ENCODE measurements at regions of chr1 and their contacts with region 1.

Region 1: DNA sequence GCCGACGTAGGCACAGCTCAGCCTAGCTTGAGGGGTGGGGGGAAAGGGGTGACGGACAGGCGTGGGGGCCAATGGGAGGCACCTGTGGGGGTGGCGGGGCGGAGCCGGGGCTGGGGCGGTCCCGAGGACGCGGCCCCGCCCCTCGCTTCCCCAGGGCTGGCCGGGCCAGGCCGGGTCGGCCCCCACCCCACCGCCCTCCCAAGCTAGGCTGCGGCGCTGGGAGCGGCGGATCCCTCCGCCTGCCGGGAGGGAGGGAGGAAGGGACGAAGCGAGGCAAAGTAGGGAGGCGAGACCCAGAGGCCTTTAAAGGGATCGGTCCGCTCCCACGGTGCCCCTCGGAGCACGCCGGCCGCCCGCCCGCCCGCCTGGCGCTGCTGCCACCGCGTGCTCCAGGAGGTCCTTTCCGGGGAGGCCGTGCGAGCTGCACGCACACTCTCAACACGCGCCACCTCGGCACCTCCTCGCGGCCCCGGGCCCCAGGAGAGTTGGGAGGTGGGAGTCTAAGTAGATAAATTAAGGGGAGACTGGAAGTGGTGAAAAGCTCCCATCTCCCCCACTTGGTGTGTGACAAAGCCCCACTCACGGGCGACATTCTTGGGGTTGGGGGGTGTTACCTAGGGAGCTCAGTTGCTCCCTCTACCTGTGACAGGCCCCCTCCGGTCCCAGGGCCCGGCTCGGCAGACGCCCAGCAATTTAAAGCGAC is 373 bp upstream of the MEF2D start:
- DNase-seq: peak; percentile 87
- H3K4me3 Mint-ChIP-seq: peak overlapping the region; percentile 90
- H3K27ac Mint-ChIP-seq: peak overlapping the region; percentile 91
- H3K4me1 Mint-ChIP-seq: peaks cover 78% of the 10 kb centered on the region
- H3K27me3 Mint-ChIP-seq: no peaks in the 10 kb centered on the region

Region 2: GRCh38 chr1:156338180-156338973 is 162.6 kb before region 1 on chr1 and contains the starts of genes CCT3 and TSACC:
- intact Hi-C with region 1: loop called (anchors 1 kb)
- DNase-seq: peak; percentile 99
- H3K4me3 Mint-ChIP-seq: peak within 1 kb of the TSS; percentile 98
- H3K27ac Mint-ChIP-seq: peak within 1 kb of the TSS; percentile 95
- H3K4me1 Mint-ChIP-seq: peaks cover 41% of the 10 kb centered on the region
- H3K27me3 Mint-ChIP-seq: peaks cover 5% of the 10 kb centered on the region
- total RNA-seq, gene CCT3: 567 and 570 TPM in 2 replicates
- total RNA-seq, gene TSACC: 0.81 TPM in 1 of 2 replicates, not detected in the other

Region 3: DNA sequence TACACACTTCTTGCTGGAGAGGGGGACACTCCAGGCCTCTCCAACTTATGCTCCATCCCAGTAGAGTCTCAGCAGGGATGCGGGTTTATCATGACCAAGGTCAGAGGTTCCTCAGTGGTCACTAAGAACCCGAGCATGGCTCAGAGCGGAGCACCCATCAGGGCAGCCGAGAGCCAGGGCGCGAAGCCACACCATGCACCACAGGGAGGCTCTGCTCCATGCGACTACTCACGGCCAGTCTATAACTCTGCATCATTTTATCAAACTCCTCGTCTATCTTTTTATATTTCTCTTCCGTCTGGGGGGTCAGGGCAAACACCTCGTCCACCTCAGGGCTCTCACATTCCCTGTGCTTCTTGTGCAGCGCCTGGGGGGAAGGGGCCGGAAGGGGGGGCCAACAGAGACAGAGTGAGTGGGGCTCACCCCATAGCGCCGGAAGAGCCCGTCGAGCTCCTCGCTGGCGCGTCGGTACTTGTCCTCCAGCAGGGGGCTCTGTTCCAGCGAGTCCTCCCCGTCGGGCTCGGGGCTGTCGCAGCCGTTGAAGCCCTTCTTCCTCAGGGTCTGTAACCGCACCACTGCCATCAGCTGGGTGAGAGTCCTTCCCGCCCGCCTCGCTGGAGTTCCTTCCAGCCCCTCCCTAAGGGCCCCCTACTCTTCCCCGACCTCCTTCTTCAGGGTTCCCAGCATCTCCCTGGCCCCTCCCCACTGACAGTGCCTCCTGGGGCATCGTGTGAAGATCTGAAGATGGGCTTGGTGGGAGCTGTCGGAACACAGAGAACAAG is 20.3 kb before region 1 on chr1:
- intact Hi-C with region 1: loop called (anchors 1 kb)
- DNase-seq: peak; percentile 63
- H3K4me3 Mint-ChIP-seq: peak overlapping the region; percentile 17
- H3K27ac Mint-ChIP-seq: peak overlapping the region; percentile 78
- H3K4me1 Mint-ChIP-seq: peaks cover 53% of the 10 kb centered on the region
- H3K27me3 Mint-ChIP-seq: no peaks in the 10 kb centered on the region

Region 4: GRCh38 chr1:156524481-156524869 is 23.5 kb after region 1 on chr1:
- intact Hi-C with region 1: loop called (anchors 1 kb)
- DNase-seq: no peak
- H3K4me3 Mint-ChIP-seq: peak overlapping the region; percentile 40
- H3K27ac Mint-ChIP-seq: peak overlapping the region; percentile 82
- H3K4me1 Mint-ChIP-seq: peaks cover 32% of the 10 kb centered on the region
- H3K27me3 Mint-ChIP-seq: no peaks in the 10 kb centered on the region

Region 5: GRCh38 chr1:156601122-156601830 is 100.3 kb after region 1 on chr1 and contains the start of gene GPATCH4:
- intact Hi-C with region 1: loop called (anchors 2 kb)
- DNase-seq: peak; percentile 76
- H3K4me3 Mint-ChIP-seq: peak within 1 kb of the TSS; percentile 100
- H3K27ac Mint-ChIP-seq: peak within 1 kb of the TSS; percentile 99
- H3K4me1 Mint-ChIP-seq: peaks cover 37% of the 10 kb centered on the region
- H3K27me3 Mint-ChIP-seq: no peaks in the 10 kb centered on the region
- total RNA-seq, gene GPATCH4: 102 and 104 TPM in 2 replicates

Region 6: GRCh38 chr1:156767101-156767878 is 266.3 kb after region 1 on chr1 and contains the start of gene PRCC:
- intact Hi-C with region 1: loop called (anchors 1 kb)
- DNase-seq: peak; percentile 97
- H3K4me3 Mint-ChIP-seq: no peak within 1 kb of the TSS
- H3K27ac Mint-ChIP-seq: no peak within 1 kb of the TSS
- H3K4me1 Mint-ChIP-seq: peaks cover 46% of the 10 kb centered on the region
- H3K27me3 Mint-ChIP-seq: no peaks in the 10 kb centered on the region
- total RNA-seq, gene PRCC: 117 TPM in 2 replicates

Measured in activated T-helper 1 cell treated with anti-CD3 and anti-CD28 coated beads, Interleukin-12 subunit alpha, Interleukin-12 subunit beta, Interleukin-2, Interleukin-4 antibody, amounts not matched to agents 30 ng/mL and 10 ng/mL and 1 ng/mL, durations not matched to agents 14 hours and 24 hours and 36 hours (primary cell).